ENCODE measurements at regions of chr11 and their contacts with region 1.

Region 1: DNA sequence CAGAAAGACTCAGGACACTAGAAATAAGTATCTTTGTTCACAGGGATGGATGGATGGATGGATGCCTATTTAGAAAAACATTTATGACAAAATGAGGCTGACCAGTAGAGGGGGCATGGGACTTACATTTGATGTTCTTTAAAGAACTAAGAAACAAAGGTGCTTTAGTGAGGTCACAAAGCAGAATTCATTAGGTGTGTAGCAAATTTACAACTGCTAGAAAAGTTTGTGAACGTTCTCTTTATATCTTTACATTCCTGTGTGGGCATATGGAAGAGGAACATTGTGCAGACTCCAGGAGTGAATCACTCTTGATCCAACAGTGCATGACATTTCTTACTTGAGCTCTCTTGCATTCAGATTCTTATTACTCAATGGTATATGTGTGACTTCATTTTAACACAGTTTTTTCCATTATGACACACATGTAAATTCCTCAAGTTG is 15.8 kb upstream of the SIK2 start:
- DNase-seq: no peak
- H3K4me3 ChIP-seq: no peak overlapping the region
- CTCF ChIP-seq: peak; percentile 43

Region 2: DNA sequence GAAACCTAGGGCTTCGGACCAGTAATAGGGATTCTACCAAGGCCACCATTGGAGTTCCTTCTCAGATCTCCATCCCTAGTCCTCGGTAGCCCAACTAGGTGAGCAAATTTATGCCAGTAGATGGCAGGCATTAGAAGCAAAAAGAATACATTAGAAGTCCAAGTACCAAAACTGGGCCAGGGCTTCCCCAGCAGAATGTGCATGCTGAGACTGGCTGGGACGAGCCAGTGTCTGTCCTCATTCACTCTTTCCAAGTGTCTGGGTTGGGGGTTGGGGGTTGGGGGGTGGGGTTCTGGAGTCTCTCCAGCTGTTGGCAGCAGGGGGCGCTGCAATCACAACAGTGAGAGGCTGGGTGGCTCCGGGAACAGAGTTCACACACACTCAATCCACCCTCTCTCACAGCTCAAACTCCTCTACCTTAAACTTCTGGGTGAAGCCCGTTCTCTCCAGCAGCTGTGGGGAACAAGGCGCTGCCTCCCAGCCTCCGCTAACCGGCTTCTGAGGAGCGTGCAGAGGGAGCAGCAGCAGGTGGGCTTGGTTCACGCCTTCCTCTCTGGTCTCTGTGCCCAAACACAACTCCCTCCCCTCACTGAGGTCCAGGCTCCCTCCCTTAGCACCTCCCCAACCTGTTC is 131.7 kb before region 1 on chr11:
- CTCF ChIA-PET with region 1: interaction called, 12 read pairs
- POLR2A ChIA-PET with region 1: no interaction called
- DNase-seq: peak; percentile 5
- H3K4me3 ChIP-seq: no peak overlapping the region
- CTCF ChIP-seq: peak; percentile 69

Region 3: DNA sequence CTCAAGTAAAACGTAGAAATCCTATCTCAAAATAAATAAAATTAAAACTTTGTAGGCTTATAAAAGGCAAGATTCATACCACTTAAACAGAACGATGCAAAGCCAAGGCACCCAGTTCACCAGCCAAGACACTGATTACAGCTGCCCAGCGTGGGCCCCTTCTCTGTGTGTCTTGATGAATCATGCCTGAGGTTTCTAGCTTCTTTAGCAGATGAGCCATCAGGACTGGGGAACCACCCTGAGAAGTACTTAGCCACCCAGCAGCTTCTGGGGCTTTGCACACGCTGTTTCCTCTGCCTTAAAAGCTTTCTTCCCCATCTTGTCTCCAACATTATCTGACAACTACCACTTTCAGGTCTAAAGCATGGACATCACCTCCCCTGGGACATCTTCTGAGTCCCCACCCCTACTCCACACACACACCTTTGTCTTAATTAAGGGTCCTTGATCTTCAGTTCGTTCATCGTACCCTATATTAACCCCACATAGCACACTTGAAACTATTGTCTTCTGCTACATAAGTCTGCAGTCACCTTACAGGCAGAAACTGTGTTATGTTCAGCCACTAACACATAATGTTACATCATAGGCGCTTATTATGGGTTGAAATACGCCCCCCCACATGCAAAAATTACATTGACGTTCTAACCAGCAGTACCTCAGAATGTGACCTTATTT is 54.6 kb before region 1 on chr11:
- CTCF ChIA-PET with region 1: no interaction called
- POLR2A ChIA-PET with region 1: no interaction called
- DNase-seq: peak; percentile 77
- H3K4me3 ChIP-seq: no peak overlapping the region
- CTCF ChIP-seq: no peak

Region 4: DNA sequence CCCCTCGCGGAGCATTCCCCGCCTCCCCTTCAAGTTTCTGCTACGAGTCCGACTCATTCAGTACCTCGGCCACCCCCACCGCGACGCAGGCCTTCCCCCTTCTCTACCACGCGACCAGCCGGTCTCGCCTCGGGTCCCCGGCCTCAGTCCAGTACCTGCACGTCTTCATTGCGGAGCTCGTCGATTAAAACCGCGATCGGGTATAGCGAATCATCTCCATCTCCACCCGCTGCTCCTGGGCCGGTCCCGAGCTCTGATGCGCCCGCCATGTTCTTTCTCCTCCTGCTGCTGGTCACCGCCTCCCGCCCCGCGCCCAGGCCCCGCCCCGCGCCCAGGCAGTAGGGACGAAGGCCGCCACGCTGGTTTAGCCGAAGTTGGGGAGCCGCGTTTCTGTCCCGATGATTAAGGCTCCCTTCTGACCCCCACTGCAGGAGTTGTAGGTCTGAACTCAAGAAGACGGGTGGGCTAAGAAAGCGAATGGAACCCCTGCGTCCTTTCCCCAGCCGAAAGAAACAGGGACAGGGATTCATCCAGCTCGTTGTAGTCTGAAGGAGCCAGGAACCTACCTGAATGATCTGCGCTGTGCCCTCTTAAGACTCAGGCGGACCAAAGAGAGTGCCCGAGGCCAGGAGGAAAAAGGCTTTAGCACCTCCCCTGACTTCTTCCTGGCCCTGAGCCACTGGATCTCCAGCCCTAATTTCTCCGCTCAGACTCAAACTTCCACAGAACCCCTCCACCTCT is 179.9 kb after region 1 on chr11 and contains the start of gene PPP2R1B:
- CTCF ChIA-PET with region 1: interaction called, 34 read pairs
- POLR2A ChIA-PET with region 1: no interaction called
- DNase-seq: no peak
- H3K4me3 ChIP-seq: peak within 1 kb of the TSS; percentile 95
- CTCF ChIP-seq: no peak

Region 5: DNA sequence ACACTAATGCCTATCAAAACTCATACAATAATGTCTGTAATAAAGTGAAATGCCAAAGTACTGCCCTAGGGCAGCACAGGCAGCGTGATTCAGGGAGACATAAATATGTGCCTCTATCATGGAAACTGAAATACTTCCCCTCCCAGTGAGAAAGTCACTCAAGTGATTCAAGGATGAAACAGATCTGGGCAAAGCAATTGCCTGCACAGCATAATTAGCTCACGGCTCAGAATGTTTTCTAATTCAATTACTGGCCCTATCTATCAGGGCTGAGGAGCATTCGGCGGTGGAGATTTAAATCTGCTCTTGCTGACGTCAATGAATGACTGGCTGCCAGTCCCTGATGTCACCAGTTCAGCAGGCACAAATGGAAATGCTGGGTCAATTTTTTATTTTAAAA is 207.5 kb after region 1 on chr11:
- CTCF ChIA-PET with region 1: interaction called, 11 read pairs
- POLR2A ChIA-PET with region 1: no interaction called
- DNase-seq: peak; percentile 57
- H3K4me3 ChIP-seq: no peak overlapping the region
- CTCF ChIP-seq: no peak

Region 6: DNA sequence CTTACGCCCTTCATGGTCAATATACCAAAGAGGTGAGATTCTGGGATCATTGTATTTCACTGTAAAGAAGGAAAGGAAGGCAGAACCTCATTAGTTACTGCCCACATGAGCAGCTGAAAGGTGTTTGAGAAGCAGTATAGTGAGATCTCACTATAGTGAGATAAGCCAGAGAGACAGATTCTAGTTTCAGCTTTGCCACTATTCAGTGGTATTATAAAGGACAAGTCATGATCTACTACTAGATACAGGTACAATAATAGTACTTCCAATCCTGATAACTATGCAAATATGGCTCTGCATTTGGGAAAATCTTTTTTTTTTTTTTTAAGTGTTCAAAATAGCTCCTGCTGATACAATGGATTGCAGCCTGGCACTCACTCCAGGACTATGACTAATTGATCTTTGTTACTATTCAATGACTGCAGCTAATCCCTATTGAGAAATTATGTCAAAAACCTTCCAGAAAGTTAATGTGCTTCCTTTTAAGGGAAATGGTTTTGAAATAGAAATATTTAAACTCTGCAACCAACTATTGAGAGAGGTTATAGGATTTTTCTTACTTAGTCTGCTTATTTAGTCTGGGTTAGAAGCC is 430.5 kb after region 1 on chr11:
- CTCF ChIA-PET with region 1: no interaction called
- POLR2A ChIA-PET with region 1: no interaction called
- DNase-seq: no peak
- H3K4me3 ChIP-seq: no peak overlapping the region
- CTCF ChIP-seq: no peak